Heart right ventricle (tissue), 16 donors: ENCODE measurements at regions of chr7 and their contacts with region 1.

Region 1: DNA sequence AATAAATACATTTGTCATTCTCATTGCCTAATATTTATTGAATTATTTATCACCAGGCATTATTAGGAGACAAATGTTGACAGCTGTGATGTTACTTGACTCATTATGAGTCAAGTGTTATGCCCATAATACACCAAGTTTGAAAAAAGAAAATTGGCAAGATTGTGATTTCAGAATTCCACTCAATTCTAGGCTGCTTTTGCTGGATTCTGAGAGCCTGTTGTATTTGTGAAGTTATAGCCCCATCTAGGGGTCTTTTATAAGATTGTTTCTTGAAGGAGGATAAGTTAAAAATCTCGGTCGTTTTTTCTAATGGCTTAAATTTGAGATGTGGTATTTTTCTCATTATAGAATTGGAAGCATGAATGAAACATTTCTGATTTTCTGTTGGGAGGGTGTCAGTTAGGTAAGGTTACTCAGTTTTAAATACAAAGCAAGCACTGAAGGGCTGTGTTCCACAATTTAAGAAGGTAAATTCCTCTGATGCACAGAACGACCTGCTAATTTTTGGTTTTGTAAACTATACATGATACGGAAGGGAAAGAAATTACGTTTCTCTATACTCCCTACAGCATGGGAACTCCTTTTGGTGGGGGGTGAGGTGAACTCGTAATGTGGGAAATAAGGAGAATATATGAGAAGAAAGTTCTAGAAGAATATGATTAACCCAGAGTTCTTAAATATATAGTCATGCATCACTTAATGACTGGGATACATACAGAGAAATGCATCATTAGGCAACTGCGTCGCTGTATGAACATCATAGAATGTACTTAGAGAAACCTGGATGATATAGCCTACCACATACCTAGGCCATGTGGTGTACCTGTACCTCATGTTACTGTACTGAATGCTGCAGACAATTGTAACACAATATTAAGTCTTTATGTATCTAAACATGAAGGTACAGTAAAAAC is 2.6 kb downstream of the STK31 start:
- DNase-seq: no peak
- ATAC-seq: peak in 2 of 8 donors; percentile 42 to 71
- H3K4me3 ChIP-seq: no peak overlapping the region
- H3K27ac ChIP-seq: no peak overlapping the region
- H3K4me1 ChIP-seq: no peaks in the 10 kb centered on the region
- H3K27me3 ChIP-seq: no peaks in the 10 kb centered on the region
- CTCF ChIP-seq: peak; percentile 47 to 81 (median 64)

Region 2: DNA sequence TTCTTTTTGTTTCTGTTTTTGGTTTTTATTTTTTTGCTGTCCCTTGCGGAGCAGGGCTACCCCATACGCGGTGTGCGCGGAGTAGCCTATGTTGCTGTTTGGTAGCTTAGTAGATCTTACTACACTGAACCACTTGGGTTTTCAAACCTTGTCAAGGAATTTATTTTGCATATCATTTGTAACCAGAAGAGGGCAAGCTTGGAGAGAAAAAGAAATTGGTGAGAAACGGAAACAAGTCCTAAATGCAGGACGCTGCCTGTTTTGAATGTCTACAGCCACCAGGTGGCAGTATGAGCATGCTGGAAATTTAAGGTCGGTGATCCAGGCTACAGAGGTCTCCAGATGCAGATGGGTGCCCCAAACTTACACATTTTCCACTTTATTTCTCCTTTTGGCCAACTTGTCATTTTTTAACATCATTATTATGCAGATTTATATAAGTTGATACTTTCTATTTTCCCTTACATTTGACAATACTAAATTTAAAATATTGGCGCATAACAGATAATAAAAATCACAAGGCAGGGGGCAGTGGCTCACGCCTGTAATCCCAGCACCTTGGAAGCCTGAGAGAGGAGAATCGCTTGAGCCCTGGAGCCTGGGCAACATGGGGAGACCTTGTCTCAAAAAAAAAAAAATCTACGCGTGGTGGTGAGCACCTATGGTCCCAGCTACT is 165.6 kb before region 1 on chr7:
- intact Hi-C with region 1: loop called in 6 of 10 experiments (anchors 2 to 5 kb)
- DNase-seq: peak; percentile 37 to 76
- ATAC-seq: peak in 7 of 8 donors; percentile 58 to 91 (median 83)
- H3K4me3 ChIP-seq: no peak overlapping the region
- H3K27ac ChIP-seq: no peak overlapping the region
- H3K4me1 ChIP-seq: peaks cover 0 to 3% (median 0%) of the 10 kb centered on the region in 9 donors
- H3K27me3 ChIP-seq: no peaks in the 10 kb centered on the region
- CTCF ChIP-seq: peak in 8 of 9 donors; percentile 85 to 97 (median 94)

Region 3: GRCh38 chr7:23787272-23787671 is 74.6 kb after region 1 on chr7:
- intact Hi-C with region 1: no loop called
- DNase-seq: no peak
- ATAC-seq: no peak
- H3K4me3 ChIP-seq: no peak overlapping the region
- H3K27ac ChIP-seq: no peak overlapping the region
- H3K4me1 ChIP-seq: no peaks in the 10 kb centered on the region
- H3K27me3 ChIP-seq: no peaks in the 10 kb centered on the region
- CTCF ChIP-seq: no peak

Region 4: GRCh38 chr7:24082826-24083225 is 370.2 kb after region 1 on chr7:
- intact Hi-C with region 1: no loop called
- DNase-seq: no peak
- ATAC-seq: no peak
- H3K4me3 ChIP-seq: no peak overlapping the region
- H3K27ac ChIP-seq: no peak overlapping the region
- H3K4me1 ChIP-seq: no peaks in the 10 kb centered on the region
- H3K27me3 ChIP-seq: peaks cover 0 to 4% (median 0%) of the 10 kb centered on the region in 7 donors
- CTCF ChIP-seq: no peak